ENCODE measurements at regions of chr18 and their contacts with region 1.

Region 1: GRCh38 chr18:78525366-78526111 is 454.1 kb upstream of the SALL3 start:
- DNase-seq: peak; percentile 3
- H3K4me3 Mint-ChIP-seq: no peak overlapping the region
- H3K27ac Mint-ChIP-seq: no peak overlapping the region
- H3K4me1 Mint-ChIP-seq: no peaks in the 10 kb centered on the region
- H3K27me3 Mint-ChIP-seq: peaks cover 6% of the 10 kb centered on the region
- CTCF ChIP-seq: no peak

Region 2: DNA sequence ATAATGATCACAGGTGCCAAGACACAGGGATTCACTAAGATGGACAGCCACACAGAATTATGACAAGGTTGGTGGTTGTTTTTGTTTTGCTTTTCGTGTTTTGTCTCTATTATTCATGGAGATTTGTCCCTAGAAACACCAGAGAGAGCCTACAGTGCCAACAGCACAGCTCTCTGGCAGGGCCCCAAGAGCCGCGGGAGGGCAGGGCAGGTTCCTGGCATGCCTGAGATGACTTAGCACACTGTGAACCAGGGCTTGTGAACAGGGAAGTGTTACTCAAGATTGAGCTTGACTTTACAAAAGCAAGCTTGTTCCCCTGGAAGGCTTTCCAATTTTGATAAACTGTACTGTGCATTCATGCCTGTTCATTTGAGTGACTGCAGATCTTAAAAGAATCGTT is 16.7 kb after region 1 on chr18:
- CTCF ChIA-PET with region 1: interaction called, 3 read pairs
- POLR2A ChIA-PET with region 1: interaction called, 10 read pairs
- intact Hi-C with region 1: no loop called
- DNase-seq: peak; percentile 1
- H3K4me3 Mint-ChIP-seq: no peak overlapping the region
- H3K27ac Mint-ChIP-seq: no peak overlapping the region
- H3K4me1 Mint-ChIP-seq: peaks cover 5% of the 10 kb centered on the region
- H3K27me3 Mint-ChIP-seq: no peaks in the 10 kb centered on the region
- CTCF ChIP-seq: no peak

Measured in MCF 10A (cell line).